Activated T-helper 1 cell treated with anti-CD3 and anti-CD28 coated beads, Interleukin-12 subunit alpha, Interleukin-12 subunit beta, Interleukin-2, Interleukin-4 antibody, amounts not matched to agents 30 ng/mL and 10 ng/mL and 1 ng/mL, durations not matched to agents 14 hours and 24 hours and 36 hours (primary cell): ENCODE measurements at regions of chr4 and their contacts with region 1.

Region 1: GRCh38 chr4:100109921-100110320 is 80.3 kb downstream of the DDIT4L start:
- DNase-seq: no peak
- H3K4me3 Mint-ChIP-seq: no peak overlapping the region
- H3K27ac Mint-ChIP-seq: no peak overlapping the region
- H3K4me1 Mint-ChIP-seq: peaks cover 49% of the 10 kb centered on the region
- H3K27me3 Mint-ChIP-seq: peaks cover 2% of the 10 kb centered on the region

Region 2: DNA sequence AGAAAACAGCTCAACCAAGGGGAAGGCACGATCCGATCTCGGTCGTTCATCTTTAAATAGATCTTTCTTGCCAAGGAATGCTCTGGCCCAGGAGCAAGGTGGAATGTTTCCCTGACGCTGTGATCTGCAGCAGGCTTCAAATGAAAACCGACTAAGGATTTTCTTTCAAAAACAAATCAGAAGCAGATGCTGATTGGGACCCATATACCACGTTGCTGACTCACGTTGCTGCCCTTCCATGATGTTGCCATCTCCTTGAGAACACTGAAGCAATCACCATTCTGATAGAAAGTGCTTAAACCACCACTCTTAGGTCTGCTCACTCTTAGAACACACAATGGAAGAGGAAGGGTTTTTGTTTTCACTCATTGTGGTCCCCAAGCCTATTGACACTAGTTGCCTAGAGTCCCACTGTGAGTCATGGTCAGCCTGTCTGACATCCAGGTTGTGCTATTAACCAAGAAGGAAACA is 241.8 kb before region 1 on chr4:
- intact Hi-C with region 1: no loop called
- DNase-seq: no peak
- H3K4me3 Mint-ChIP-seq: no peak overlapping the region
- H3K27ac Mint-ChIP-seq: no peak overlapping the region
- H3K4me1 Mint-ChIP-seq: peaks cover 15% of the 10 kb centered on the region
- H3K27me3 Mint-ChIP-seq: no peaks in the 10 kb centered on the region

Region 3: GRCh38 chr4:100130491-100130890 is 20.6 kb after region 1 on chr4:
- intact Hi-C with region 1: loop called (anchors 2 kb)
- DNase-seq: no peak
- H3K4me3 Mint-ChIP-seq: no peak overlapping the region
- H3K27ac Mint-ChIP-seq: no peak overlapping the region
- H3K4me1 Mint-ChIP-seq: no peaks in the 10 kb centered on the region
- H3K27me3 Mint-ChIP-seq: peaks cover 9% of the 10 kb centered on the region